Natural killer cell (primary cell): ENCODE measurements at regions of chr10 and their contacts with region 1.

Region 1: DNA sequence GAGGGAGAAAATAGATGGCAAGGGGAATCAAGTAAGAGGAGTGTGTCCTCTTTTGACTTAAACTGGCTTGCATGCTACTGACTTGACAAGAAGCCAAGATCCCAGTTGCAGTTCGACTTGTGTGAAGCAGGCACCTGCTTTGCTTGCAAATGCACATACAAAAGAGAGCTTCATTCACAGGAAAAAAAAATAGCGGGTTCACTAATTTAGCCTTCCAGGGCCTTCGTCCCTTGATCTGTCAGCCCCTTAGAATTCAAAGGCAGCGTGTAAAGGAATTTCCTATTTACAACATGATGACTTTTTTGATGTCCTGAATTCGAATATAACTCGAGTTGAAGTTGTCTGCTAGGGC is 192.1 kb downstream of the CELF2 start:
- DNase-seq: peak in 1 of 2 donors; percentile 64
- ATAC-seq: no peak
- H3K4me3 ChIP-seq: no peak overlapping the region
- H3K4me3 Mint-ChIP-seq: peak overlapping the region; percentile 76
- H3K27ac ChIP-seq: peak overlapping the region; percentile 63
- H3K27ac Mint-ChIP-seq: no peak overlapping the region
- H3K4me1 ChIP-seq: peaks cover 82% of the 10 kb centered on the region
- H3K4me1 Mint-ChIP-seq: peaks cover 98 to 100% of the 10 kb centered on the region in 2 donors
- H3K27me3 ChIP-seq: no peaks in the 10 kb centered on the region
- H3K27me3 Mint-ChIP-seq: no peaks in the 10 kb centered on the region
- CTCF ChIP-seq: no peak

Region 2: DNA sequence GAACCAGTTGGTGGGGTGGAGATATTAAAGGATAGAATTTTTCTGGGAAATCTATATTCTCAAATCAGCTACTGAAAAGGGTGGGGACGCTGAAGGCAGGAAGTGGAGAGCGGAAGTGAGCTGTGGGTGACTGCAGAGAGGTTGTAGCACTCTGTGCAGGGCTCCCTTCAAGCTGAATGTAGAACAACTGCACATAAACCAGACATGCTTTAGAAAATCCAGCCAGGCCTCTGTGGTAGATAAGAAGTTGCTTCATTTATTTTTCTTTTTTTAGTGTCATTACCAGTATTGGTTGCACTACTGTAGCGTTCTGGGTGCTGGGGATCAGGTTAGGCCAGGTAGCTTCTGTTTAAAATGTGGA is 64.3 kb before region 1 on chr10:
- intact Hi-C with region 1: loop called (anchors 5 kb)
- DNase-seq: peak; percentile 49 to 88
- ATAC-seq: peak; percentile 63 to 87 (median 85)
- H3K4me3 ChIP-seq: no peak overlapping the region
- H3K4me3 Mint-ChIP-seq: peak overlapping the region; percentile 87
- H3K27ac ChIP-seq: peak overlapping the region; percentile 74
- H3K27ac Mint-ChIP-seq: peak overlapping the region; percentile 92 to 94
- H3K4me1 ChIP-seq: peaks cover 73% of the 10 kb centered on the region
- H3K4me1 Mint-ChIP-seq: peaks cover 93 to 97% of the 10 kb centered on the region in 2 donors
- H3K27me3 ChIP-seq: no peaks in the 10 kb centered on the region
- H3K27me3 Mint-ChIP-seq: no peaks in the 10 kb centered on the region
- CTCF ChIP-seq: no peak

Region 3: GRCh38 chr10:11157292-11158076 is 52.3 kb before region 1 on chr10:
- intact Hi-C with region 1: no loop called
- DNase-seq: peak in 1 of 2 donors; percentile 47
- ATAC-seq: peak in 2 of 3 donors; percentile 30 to 63
- H3K4me3 ChIP-seq: no peak overlapping the region
- H3K4me3 Mint-ChIP-seq: peak overlapping the region; percentile 65
- H3K27ac ChIP-seq: peak overlapping the region; percentile 28
- H3K27ac Mint-ChIP-seq: peak overlapping the region; percentile 65 to 85
- H3K4me1 ChIP-seq: peaks cover 60% of the 10 kb centered on the region
- H3K4me1 Mint-ChIP-seq: peaks cover 64 to 73% of the 10 kb centered on the region in 2 donors
- H3K27me3 ChIP-seq: no peaks in the 10 kb centered on the region
- H3K27me3 Mint-ChIP-seq: no peaks in the 10 kb centered on the region
- CTCF ChIP-seq: no peak

Region 4: GRCh38 chr10:11197266-11197712 is 12.5 kb before region 1 on chr10:
- intact Hi-C with region 1: loop called (anchors 1 kb)
- DNase-seq: peak in 1 of 2 donors; percentile 33
- ATAC-seq: peak; percentile 39 to 61 (median 59)
- H3K4me3 ChIP-seq: no peak overlapping the region
- H3K4me3 Mint-ChIP-seq: peak overlapping the region; percentile 77
- H3K27ac ChIP-seq: peak overlapping the region; percentile 37
- H3K27ac Mint-ChIP-seq: no peak overlapping the region
- H3K4me1 ChIP-seq: peaks cover 76% of the 10 kb centered on the region
- H3K4me1 Mint-ChIP-seq: peaks cover 95 to 97% of the 10 kb centered on the region in 2 donors
- H3K27me3 ChIP-seq: no peaks in the 10 kb centered on the region
- H3K27me3 Mint-ChIP-seq: no peaks in the 10 kb centered on the region
- CTCF ChIP-seq: no peak

Region 5: GRCh38 chr10:11225935-11226334 is 16.1 kb after region 1 on chr10:
- intact Hi-C with region 1: loop called (anchors 2 kb)
- DNase-seq: peak; percentile 60 to 82
- ATAC-seq: peak; percentile 64 to 76 (median 67)
- H3K4me3 ChIP-seq: no peak overlapping the region
- H3K4me3 Mint-ChIP-seq: peak overlapping the region; percentile 63
- H3K27ac ChIP-seq: peak overlapping the region; percentile 76
- H3K27ac Mint-ChIP-seq: no peak overlapping the region
- H3K4me1 ChIP-seq: peaks cover 76% of the 10 kb centered on the region
- H3K4me1 Mint-ChIP-seq: peaks cover 97 to 99% of the 10 kb centered on the region in 2 donors
- H3K27me3 ChIP-seq: no peaks in the 10 kb centered on the region
- H3K27me3 Mint-ChIP-seq: no peaks in the 10 kb centered on the region
- CTCF ChIP-seq: no peak

Region 6: GRCh38 chr10:11236234-11236633 is 26.4 kb after region 1 on chr10:
- intact Hi-C with region 1: loop called (anchors 2 kb)
- DNase-seq: peak in 1 of 2 donors; percentile 70
- ATAC-seq: peak in 2 of 3 donors; percentile 10 to 20
- H3K4me3 ChIP-seq: no peak overlapping the region
- H3K4me3 Mint-ChIP-seq: peak overlapping the region; percentile 71
- H3K27ac ChIP-seq: peak overlapping the region; percentile 80
- H3K27ac Mint-ChIP-seq: no peak overlapping the region
- H3K4me1 ChIP-seq: peaks cover 58% of the 10 kb centered on the region
- H3K4me1 Mint-ChIP-seq: peaks cover 67 to 89% of the 10 kb centered on the region in 2 donors
- H3K27me3 ChIP-seq: no peaks in the 10 kb centered on the region
- H3K27me3 Mint-ChIP-seq: no peaks in the 10 kb centered on the region
- CTCF ChIP-seq: no peak